Posterior vena cava (tissue), 2 donors: ENCODE measurements at regions of chr20 and their contacts with region 1.

Region 1: DNA sequence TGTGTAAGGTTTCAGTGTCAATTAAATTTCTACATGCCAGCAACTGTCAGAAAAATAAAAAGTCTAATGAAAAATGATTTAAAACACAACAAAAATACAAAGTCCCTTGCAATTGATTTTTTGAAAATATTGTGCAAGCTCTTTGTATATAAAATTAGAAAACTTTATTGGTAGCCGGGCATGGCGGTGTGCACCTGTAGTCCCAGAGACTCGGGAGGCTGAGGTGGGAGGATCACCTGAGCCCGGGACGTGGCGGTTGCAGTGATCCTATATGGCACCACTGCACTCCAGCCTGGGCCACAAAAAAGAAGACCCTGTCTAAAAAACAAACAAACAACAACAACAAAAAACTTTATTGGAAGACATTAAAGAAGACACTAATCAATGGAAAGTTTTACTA is 6.0 kb upstream of the OVOL2 start:
- DNase-seq: no peak

Region 2: DNA sequence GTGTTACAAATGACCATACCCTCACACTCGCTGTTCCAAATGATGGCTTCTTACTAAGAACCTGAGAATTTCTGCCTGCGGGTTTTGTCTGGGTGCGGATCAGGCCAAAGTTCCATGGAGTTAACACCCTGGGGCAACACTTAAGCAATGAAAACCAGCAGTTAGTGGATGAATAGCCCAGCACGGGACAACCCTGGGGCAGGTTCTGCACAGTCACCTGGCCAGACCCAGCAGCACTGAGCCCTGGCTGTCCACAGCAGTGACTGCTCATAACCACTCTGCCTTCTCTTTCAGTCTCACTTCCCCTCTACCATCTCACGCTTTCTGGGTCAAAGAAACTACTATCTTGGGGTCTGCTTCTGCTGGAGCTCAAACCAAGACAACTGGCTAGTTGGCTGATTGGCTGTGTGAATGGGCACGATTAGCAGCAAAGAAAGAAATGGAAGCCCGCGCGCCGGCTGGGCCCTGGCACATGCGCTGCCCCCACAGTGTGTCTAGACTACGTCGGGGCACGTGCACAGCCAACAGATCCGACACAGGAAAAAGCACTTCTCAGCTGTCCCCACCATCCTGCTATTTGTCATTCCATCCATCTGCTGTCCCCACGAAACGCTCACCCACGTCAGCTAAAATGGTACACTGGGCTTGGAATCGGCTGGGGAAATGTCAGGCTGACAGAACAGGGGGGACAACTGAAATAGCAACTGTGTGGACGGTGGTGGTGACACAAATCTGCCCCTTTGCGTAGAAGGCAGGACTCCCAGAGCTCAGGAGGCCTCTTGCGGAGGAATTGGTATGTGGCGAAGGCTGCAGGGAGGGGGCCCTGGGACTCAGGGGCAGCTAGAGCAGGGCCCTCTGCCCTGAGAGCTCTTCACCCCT is 58.2 kb before region 1 on chr20:
- intact Hi-C with region 1: no loop called
- DNase-seq: no peak

Region 3: DNA sequence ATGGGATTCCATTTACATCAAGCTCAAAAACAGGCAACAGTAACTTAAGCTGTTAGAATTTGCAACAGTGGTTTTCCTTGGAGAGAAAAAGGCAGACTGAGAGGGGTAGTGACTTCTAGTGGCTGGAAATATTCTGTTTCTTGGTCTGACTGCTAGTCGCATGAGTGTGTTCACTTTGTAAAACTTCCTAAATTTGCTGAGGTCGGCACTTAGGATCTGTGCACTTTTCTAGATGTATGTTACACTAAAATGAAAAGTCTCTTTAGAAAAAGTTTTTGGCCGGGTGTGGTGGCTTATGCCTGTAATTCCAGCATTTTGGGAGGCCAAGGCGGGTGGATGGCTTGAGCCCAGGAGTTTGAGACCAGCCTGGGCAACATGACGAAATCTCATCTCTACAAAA is 24.6 kb before region 1 on chr20:
- intact Hi-C with region 1: loop called in 1 of 2 experiments (anchors 1 kb)
- DNase-seq: no peak

Region 4: GRCh38 chr20:18050628-18051027 is 13.0 kb before region 1 on chr20:
- intact Hi-C with region 1: no loop called
- DNase-seq: no peak